ENCODE measurements at regions of chr2 and their contacts with region 1.

Region 1: DNA sequence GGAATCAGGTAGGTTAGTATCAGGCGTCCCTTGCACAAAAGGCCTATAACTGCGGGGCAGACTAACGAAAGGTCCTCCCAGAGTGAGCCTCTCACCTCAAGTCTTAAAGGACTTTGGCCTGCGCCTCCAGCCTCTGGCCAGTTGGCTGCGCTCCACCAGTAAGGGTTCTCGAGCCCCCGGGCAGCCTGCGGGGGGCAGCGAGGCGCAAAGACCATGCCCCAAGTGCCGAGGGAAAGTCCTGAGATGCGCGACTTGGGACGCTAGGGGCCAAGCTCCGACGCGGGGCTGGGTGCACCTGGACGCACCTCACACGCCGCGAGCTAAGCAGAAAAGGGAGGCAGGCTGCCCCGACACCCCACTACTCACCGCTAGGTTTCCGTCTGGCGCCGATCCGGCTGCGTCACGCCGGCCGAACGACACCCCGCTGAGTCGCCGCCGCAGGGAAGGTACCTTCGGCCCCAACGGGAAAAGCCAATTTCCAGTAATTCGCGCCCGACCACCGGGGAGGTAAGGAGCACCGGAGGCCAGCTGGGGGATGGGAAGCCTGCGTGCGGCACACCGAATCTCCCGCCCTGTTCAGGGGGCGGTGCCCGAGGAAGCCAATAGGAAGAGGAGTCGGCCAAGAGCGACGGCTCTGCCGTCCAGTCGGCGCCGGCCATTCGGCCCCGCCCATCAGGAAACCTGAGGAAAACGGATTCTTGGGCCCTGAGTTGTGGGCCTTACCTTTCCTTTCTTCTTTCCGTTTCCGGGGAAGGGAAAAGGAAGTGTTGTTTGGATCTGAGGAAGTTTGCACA is at the start of gene ORC2:
- DNase-seq: peak; percentile 95
- H3K4me3 Mint-ChIP-seq: peak within 1 kb of the TSS; percentile 89
- H3K27ac Mint-ChIP-seq: peak within 1 kb of the TSS; percentile 93
- H3K4me1 Mint-ChIP-seq: peaks cover 60% of the 10 kb centered on the region
- H3K27me3 Mint-ChIP-seq: no peaks in the 10 kb centered on the region
- total RNA-seq, gene ORC2: 53.0 to 65.1 TPM

Region 2: DNA sequence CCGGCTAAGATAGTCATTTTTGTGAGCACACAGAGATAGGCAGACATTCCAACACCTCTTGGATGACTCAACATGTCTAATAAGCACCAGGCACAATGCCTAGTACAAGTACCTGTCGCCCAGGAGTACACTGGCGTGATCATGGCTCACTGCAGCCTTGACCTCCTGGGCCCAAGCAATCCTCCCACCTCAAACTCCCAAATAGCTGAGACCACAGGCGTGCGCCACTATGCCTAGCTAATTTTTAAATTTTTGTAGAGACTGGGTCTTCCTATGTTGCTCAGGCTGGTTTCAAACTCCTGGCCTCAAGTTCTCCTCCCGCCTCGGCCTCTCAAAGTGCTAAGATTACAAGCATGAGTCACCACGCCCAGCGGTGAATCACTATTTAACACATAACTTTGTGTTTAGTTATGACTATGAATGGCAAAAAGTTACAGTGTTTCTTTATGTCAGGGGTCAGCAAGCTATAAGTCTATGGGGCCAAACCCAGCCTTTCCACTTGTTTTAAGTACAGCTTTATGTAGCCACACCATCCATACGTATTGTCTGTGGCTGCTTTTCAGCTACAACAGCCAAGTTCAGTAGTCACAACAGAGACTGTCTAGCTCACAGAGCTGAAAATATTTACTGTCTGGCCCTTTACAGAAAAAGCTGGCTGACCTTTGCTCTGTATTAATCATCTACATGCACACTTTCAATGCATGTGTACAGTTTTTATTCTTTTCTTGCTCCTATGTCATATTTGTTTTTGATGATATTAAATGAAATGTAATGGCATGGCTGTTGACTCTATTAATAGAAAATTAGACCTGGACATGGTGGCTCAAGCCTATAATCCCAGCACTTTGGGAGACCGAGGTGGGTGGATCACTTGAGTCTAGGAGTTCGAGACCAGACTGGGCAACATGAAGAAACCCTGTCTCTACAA is 18.6 kb before region 1 on chr2:
- CTCF ChIA-PET with region 1: interaction called, 9 read pairs
- POLR2A ChIA-PET with region 1: interaction called, 3 read pairs
- intact Hi-C with region 1: loop called (anchors 1 kb)
- DNase-seq: peak; percentile 88
- H3K4me3 Mint-ChIP-seq: no peak overlapping the region
- H3K27ac Mint-ChIP-seq: peak overlapping the region; percentile 79
- H3K4me1 Mint-ChIP-seq: peaks cover 30% of the 10 kb centered on the region
- H3K27me3 Mint-ChIP-seq: no peaks in the 10 kb centered on the region

Region 3: DNA sequence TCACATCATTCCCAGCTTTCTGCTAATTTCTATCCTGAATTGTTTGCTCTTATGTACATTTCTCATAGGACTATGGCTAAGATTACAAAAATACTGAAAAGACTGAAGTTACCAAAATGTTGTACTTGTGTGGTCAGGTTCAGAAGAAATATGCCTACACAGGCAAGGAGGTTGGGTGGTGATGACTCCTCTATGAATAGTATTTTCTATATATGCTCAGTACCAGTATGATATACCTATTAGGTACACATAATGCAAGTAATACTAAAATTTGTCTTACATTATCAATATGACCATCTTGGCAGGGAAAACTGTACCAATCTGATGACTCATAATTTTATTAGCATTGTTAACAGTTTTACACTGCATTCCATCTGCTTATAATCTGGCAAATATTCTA is 12.4 kb after region 1 on chr2:
- CTCF ChIA-PET with region 1: interaction called, 15 read pairs
- POLR2A ChIA-PET with region 1: interaction called, 4 read pairs
- intact Hi-C with region 1: no loop called
- DNase-seq: no peak
- H3K4me3 Mint-ChIP-seq: no peak overlapping the region
- H3K27ac Mint-ChIP-seq: no peak overlapping the region
- H3K4me1 Mint-ChIP-seq: peaks cover 6% of the 10 kb centered on the region
- H3K27me3 Mint-ChIP-seq: no peaks in the 10 kb centered on the region

Region 4: DNA sequence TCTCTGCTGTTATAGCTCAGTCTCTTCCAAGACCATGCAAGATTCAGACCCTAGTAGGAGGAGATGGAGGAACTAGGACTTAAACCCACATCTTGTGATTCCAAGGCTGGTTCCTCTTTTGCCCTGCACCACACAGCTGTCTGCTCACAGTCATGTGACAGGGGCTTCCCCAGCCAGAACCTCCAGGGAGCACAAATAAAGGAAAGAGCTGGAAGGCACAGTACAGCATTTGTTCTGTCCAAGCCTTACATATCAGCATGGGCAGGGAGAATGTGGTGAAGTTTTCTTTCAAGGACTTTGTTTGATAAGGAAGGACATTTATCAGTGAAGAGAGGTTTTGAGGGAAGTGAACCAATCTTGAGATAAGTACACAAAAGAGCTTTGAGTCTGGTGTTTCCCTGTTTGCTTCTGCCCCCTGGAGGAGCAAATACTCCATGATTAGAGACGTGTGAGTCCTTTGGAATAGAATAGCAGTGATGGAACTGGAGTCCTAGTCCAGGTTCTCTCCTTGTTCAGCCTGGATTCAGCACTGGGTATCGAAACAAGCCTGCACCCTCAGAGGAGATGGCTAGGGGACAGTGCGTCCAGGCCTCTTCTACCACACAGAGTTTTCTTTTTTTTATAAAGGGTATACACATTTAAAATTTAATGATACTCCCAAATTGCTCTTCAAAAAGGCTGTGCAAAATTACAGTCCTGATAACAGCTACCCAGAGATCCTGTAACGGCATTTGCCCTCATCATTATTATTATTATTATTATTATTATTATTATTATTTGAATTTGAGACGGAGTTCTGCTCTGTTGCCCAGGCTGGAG is 195.0 kb after region 1 on chr2:
- CTCF ChIA-PET with region 1: interaction called, 4 read pairs
- POLR2A ChIA-PET with region 1: no interaction called
- intact Hi-C with region 1: loop called (anchors 5 kb)
- DNase-seq: peak; percentile 50
- H3K4me3 Mint-ChIP-seq: no peak overlapping the region
- H3K27ac Mint-ChIP-seq: peak overlapping the region; percentile 75
- H3K4me1 Mint-ChIP-seq: peaks cover 26% of the 10 kb centered on the region
- H3K27me3 Mint-ChIP-seq: no peaks in the 10 kb centered on the region

Region 5: GRCh38 chr2:201176081-201176481 is 212.8 kb after region 1 on chr2:
- CTCF ChIA-PET with region 1: interaction called, 11 read pairs
- POLR2A ChIA-PET with region 1: no interaction called
- intact Hi-C with region 1: loop called (anchors 2 kb)
- DNase-seq: no peak
- H3K4me3 Mint-ChIP-seq: no peak overlapping the region
- H3K27ac Mint-ChIP-seq: no peak overlapping the region
- H3K4me1 Mint-ChIP-seq: peaks cover 16% of the 10 kb centered on the region
- H3K27me3 Mint-ChIP-seq: no peaks in the 10 kb centered on the region